Heart left ventricle (tissue), 16 donors: ENCODE measurements at regions of chr2 and their contacts with region 1.

Region 1: DNA sequence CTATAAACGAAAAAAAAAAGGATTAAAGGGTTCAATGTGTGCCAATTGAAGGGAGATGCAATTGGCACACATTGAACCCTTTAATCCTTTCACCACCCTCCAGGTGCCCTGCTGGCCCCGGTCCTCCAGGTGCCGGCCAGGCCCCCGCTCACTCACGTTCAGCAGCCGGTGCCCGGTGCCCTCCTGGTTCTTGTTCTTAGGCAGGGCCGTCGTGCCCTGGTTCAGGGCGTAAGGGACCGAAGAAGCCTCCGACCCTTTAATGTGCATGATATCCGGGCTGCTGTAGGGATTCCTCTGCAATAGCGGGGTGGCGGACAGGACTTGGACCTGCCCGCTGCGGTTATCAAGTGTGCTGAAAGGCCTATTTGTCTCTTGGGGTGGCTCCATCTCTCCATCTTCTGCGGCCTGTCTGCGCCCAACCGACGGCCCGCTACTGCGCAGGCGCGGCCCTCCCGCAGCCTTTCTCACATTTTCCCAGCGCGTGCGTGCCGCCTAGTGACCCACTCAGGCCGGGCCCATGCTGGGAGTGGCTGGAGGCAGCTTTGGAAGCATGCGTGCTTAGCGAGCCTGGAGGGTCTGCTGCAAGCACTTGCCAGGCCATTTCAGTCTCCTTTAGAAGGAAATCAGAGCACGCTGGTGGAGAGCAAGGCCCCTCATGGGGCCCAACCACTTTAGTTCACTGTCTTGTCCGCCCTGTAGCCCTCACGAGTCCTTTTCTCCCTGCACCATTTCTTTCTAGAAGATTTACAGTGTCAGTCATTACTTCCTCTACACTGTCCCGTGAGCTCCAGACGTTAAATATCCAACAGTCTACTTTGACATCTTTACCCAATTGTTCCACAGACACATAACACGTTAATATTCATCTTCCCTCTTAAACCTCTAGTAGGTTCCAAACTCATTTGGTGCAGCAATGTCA is 24.3 kb downstream of the TMEM237 start:
- DNase-seq: peak; percentile 72 to 90 (median 86)
- ATAC-seq: peak; percentile 77 to 98 (median 96)
- H3K4me3 ChIP-seq: peak overlapping the region in 10 of 12 donors; percentile 23 to 59 (median 42)
- H3K27ac ChIP-seq: peak overlapping the region in 3 of 12 donors; percentile 18 to 34 (median 27)
- H3K4me1 ChIP-seq: peaks cover 0 to 8% (median 0%) of the 10 kb centered on the region in 12 donors
- H3K27me3 ChIP-seq: no peaks in the 10 kb centered on the region
- CTCF ChIP-seq: peak in 11 of 12 donors; percentile 18 to 68 (median 49)
- POLR2A ChIP-seq: no peak

Region 2: GRCh38 chr2:201383156-201383555 is 235.8 kb before region 1 on chr2:
- intact Hi-C with region 1: loop called in 2 of 10 experiments (anchors 10 kb)
- DNase-seq: no peak
- ATAC-seq: peak in 1 of 4 donors; percentile 44
- H3K4me3 ChIP-seq: no peak overlapping the region
- H3K27ac ChIP-seq: no peak overlapping the region
- H3K4me1 ChIP-seq: no peaks in the 10 kb centered on the region
- H3K27me3 ChIP-seq: no peaks in the 10 kb centered on the region
- CTCF ChIP-seq: no peak
- POLR2A ChIP-seq: no peak

Region 3: DNA sequence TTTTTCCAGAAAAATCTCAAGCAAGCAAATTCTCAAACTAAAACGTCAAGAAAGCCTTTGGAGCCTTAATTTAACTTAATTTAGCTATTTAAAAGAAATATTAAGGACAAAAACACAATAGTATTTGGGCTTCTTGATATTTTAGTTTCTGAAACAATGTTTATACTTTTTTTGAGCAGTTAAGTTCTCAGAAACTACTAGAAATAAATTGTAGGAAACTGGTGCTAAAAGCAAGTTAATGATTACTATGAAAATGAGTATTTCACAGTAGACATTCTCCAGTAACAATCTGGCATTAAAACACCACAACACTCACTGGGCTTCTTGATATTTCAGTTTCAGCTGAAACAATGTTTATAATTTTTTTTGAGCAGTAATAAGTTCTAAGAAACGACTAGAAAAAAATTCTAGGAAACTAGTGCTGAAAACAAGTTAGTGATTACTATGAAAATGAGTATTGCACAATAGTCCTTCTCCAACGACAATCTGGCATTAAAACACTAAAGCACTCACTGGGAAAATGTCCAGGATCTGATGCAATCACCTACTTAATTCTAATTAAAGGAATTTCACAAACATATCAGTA is 212.8 kb before region 1 on chr2:
- intact Hi-C with region 1: loop called in 1 of 10 experiments (anchors 10 kb)
- DNase-seq: peak in 1 of 5 donors; percentile 37
- ATAC-seq: peak in 3 of 4 donors; percentile 13 to 61 (median 38)
- H3K4me3 ChIP-seq: peak overlapping the region in 11 of 12 donors; percentile 9 to 51 (median 27)
- H3K27ac ChIP-seq: peak overlapping the region; percentile 53 to 80 (median 72)
- H3K4me1 ChIP-seq: peaks cover 2 to 73% (median 54%) of the 10 kb centered on the region in 12 donors
- H3K27me3 ChIP-seq: no peaks in the 10 kb centered on the region
- CTCF ChIP-seq: no peak
- POLR2A ChIP-seq: no peak

Region 4: GRCh38 chr2:201484805-201485204 is 134.2 kb before region 1 on chr2:
- intact Hi-C with region 1: loop called in 2 of 10 experiments (anchors 10 kb)
- DNase-seq: no peak
- ATAC-seq: no peak
- H3K4me3 ChIP-seq: no peak overlapping the region
- H3K27ac ChIP-seq: no peak overlapping the region
- H3K4me1 ChIP-seq: no peaks in the 10 kb centered on the region
- H3K27me3 ChIP-seq: no peaks in the 10 kb centered on the region
- CTCF ChIP-seq: no peak
- POLR2A ChIP-seq: no peak

Region 5: DNA sequence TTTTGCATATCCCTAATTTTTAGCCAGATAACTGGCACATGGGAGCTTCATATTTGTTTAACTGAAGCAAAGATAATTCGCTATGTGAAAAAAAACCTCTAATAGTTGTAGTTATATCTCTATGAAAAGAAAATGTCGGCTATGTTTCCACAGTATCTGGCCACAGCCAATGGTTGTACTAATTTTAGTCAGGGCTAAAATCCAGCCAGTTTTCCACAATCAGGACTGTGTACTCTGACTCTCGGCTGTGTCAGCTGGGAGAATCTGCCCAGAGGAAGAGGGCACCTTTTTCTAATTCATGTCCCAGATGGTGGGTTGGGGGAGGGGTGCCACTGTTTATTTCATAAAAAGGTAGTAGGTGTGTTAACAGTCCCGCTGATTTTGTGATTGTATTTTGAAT is 128.7 kb before region 1 on chr2:
- intact Hi-C with region 1: loop called in 2 of 10 experiments (anchors 10 kb)
- DNase-seq: no peak
- ATAC-seq: peak; percentile 51 to 67 (median 63)
- H3K4me3 ChIP-seq: no peak overlapping the region
- H3K27ac ChIP-seq: no peak overlapping the region
- H3K4me1 ChIP-seq: no peaks in the 10 kb centered on the region
- H3K27me3 ChIP-seq: no peaks in the 10 kb centered on the region
- CTCF ChIP-seq: no peak
- POLR2A ChIP-seq: no peak